CD14-positive monocyte (primary cell): ENCODE measurements at regions of chr14 and their contacts with region 1.

Region 1: GRCh38 chr14:102694530-102695166 is 82.6 kb upstream of the TRAF3 start:
- DNase-seq: peak; percentile 37 to 62 (median 50)
- H3K4me3 ChIP-seq: no peak overlapping the region
- H3K4me3 Mint-ChIP-seq: no peak overlapping the region
- H3K27ac ChIP-seq: no peak overlapping the region
- H3K27ac Mint-ChIP-seq: peak overlapping the region in 1 of 7 donors; percentile 20
- H3K4me1 ChIP-seq: no peaks in the 10 kb centered on the region
- H3K4me1 Mint-ChIP-seq: peaks cover 24% of the 10 kb centered on the region
- H3K27me3 ChIP-seq: no peaks in the 10 kb centered on the region
- H3K27me3 Mint-ChIP-seq: peaks cover 0 to 1% (median 0%) of the 10 kb centered on the region in 3 donors
- CTCF ChIP-seq: peak; percentile 80

Region 2: GRCh38 chr14:102731871-102732800 is 37.5 kb after region 1 on chr14:
- intact Hi-C with region 1: no loop called
- DNase-seq: no peak
- H3K4me3 ChIP-seq: no peak overlapping the region
- H3K4me3 Mint-ChIP-seq: no peak overlapping the region
- H3K27ac ChIP-seq: no peak overlapping the region
- H3K27ac Mint-ChIP-seq: peak overlapping the region in 2 of 7 donors; percentile 64 to 65
- H3K4me1 ChIP-seq: no peaks in the 10 kb centered on the region
- H3K4me1 Mint-ChIP-seq: no peaks in the 10 kb centered on the region
- H3K27me3 ChIP-seq: no peaks in the 10 kb centered on the region
- H3K27me3 Mint-ChIP-seq: peaks cover 0 to 3% (median 0%) of the 10 kb centered on the region in 3 donors
- CTCF ChIP-seq: no peak

Region 3: DNA sequence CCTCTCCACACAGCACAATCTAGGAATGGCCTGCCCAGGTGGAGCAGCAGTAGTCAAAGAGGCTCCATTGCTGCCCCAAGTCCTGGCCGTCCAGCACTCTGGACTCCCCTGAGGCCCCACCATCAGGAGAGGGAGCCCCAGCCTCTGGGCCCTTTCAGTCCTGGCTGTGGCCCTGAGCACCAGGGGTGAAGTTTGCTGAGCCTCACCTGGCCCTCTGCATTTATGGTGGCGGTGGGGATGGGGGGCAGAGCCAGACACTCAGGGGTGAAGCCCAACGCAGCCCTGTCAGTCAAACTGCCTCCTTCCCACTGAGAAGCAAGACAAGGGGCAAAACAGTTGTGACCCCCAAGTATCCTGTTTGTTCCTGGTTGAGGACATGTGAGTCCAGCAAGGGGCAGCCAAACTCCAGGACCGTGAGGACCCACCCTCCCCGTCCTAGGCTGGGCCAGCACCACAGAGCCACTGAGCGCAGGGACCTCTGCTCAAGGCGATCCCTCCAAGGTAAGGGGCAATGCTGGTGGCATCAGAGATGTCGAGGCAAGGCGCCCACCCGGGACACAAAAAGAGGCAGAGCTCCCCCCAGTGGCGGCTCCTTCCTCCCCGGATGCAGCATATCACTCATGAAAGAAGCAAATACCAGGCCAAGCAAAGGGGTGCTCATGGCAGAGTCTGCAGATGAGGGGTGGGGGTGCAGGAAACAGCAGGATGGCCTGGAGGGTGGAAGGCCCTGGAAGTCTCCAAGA is 223.0 kb after region 1 on chr14:
- intact Hi-C with region 1: loop called (anchors 1 to 5 kb)
- DNase-seq: peak in 2 of 3 donors; percentile 10 to 24
- H3K4me3 ChIP-seq: no peak overlapping the region
- H3K4me3 Mint-ChIP-seq: no peak overlapping the region
- H3K27ac ChIP-seq: no peak overlapping the region
- H3K27ac Mint-ChIP-seq: no peak overlapping the region
- H3K4me1 ChIP-seq: no peaks in the 10 kb centered on the region
- H3K4me1 Mint-ChIP-seq: no peaks in the 10 kb centered on the region
- H3K27me3 ChIP-seq: peaks cover 8 to 18% of the 10 kb centered on the region in 2 donors
- H3K27me3 Mint-ChIP-seq: peaks cover 0 to 3% (median 0%) of the 10 kb centered on the region in 3 donors
- CTCF ChIP-seq: peak; percentile 71

Region 4: DNA sequence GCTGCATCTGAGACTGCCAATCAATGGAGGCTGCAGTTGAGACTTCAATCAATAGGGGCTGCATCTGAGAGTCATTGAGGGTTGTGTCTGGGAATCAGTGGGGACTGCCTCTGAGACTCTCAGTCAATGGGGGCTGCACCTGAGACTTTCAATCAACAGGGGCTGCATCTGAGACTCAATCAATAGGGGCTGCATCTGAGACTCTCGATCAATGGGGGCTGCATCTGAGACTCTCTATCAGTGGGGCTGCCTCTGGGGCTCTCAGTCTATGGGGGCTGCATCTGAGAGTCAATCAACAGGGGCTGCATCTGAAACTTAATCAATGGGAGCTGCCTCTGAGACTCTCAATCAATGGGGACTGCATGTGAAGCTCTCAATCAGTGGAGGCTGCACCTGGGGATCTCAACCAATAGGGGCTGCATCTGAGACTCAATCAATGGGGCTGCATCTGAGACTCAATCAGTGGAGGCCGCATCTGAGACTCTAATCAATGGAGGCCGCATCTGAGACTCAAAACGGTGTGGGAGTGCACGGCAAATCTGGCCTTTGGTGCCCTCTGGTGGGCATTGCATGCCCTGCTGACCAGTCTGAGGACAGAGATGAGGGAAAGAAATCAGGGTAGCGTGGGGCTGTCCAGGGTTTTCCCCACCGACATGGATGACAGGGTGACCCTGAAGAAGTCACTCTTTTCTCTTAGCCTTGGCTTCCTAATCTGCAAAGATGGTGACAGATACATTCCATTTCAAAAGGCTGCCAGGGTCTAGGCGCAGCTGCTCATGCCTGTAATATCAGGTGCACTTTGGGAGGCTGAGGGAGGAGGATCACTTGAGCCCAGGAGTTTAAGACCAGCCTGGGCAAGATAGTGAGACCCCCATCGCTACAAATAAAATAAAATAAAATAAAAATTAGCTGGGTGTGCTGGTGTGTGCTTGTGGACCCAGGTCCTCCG is 598.1 kb after region 1 on chr14:
- intact Hi-C with region 1: loop called in 1 of 2 experiments (anchors 10 kb)
- DNase-seq: peak; percentile 63 to 76 (median 67)
- H3K4me3 ChIP-seq: no peak overlapping the region
- H3K4me3 Mint-ChIP-seq: peak overlapping the region in 1 of 2 donors; percentile 30
- H3K27ac ChIP-seq: no peak overlapping the region
- H3K27ac Mint-ChIP-seq: no peak overlapping the region
- H3K4me1 ChIP-seq: no peaks in the 10 kb centered on the region
- H3K4me1 Mint-ChIP-seq: no peaks in the 10 kb centered on the region
- H3K27me3 ChIP-seq: peaks cover 0 to 10% of the 10 kb centered on the region in 2 donors
- H3K27me3 Mint-ChIP-seq: peaks cover 21 to 32% (median 31%) of the 10 kb centered on the region in 3 donors
- CTCF ChIP-seq: peak; percentile 83